ENCODE measurements at regions of chr11 and their contacts with region 1.

Region 1: GRCh38 chr11:59822989-59823566 is 12.5 kb upstream of the MRPL16 start:
- DNase-seq: peak; percentile 53
- ATAC-seq: peak; percentile 91
- H3K4me3 ChIP-seq: no peak overlapping the region
- H3K27ac ChIP-seq: no peak overlapping the region
- H3K4me1 ChIP-seq: no peaks in the 10 kb centered on the region
- H3K27me3 ChIP-seq: peaks cover 6% of the 10 kb centered on the region
- CTCF ChIP-seq: peak; percentile 68
- POLR2A ChIP-seq: no peak
- RAD21 ChIP-seq: peak; percentile 63

Region 2: DNA sequence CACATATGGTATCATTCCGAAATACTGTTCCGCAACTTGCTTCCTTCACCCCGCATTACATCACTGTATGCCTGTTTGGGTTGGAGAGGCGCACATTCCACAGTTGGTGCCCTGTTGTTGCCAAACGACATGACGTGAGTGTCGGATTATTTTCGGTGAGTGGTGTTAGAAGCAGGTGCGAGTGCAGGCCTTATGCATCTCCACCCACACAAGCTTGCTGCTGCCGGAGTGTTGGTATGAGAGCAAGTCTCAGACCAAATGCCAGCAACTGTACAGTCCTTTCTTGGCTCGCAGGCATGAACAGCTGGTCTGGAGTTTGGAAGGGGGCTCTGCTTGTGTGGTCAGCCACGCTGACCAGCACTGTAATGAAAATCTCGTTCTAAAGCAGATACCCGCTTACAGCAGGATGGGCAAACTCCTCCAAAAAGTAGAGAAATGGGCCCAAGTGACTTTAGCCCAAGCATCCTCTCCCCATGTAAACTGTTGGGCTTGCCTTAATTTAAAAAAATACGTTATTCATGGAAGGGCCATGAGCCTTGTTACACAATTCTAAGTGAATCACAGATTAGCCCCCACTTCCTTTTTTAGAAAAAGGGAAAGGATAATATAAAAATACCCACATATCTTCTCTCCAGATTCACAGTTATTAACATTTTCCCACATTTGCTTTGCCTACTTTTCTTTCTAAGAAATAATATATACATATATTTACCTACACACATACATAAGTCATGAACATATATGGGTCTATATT is 1848.1 kb before region 1 on chr11:
- CTCF ChIA-PET with region 1: no interaction called
- POLR2A ChIA-PET with region 1: no interaction called
- dilution Hi-C with region 1: no loop called
- in situ Hi-C with region 1: no loop called
- intact Hi-C with region 1: no loop called
- DNase-seq: no peak
- ATAC-seq: no peak
- H3K4me3 ChIP-seq: no peak overlapping the region
- H3K27ac ChIP-seq: no peak overlapping the region
- H3K4me1 ChIP-seq: peaks cover 2% of the 10 kb centered on the region; the same call in 1 of the 2 replicates
- H3K27me3 ChIP-seq: peaks cover 3% of the 10 kb centered on the region; the same call in 1 of the 2 replicates
- CTCF ChIP-seq: no peak
- POLR2A ChIP-seq: no peak
- RAD21 ChIP-seq: no peak

Region 3: DNA sequence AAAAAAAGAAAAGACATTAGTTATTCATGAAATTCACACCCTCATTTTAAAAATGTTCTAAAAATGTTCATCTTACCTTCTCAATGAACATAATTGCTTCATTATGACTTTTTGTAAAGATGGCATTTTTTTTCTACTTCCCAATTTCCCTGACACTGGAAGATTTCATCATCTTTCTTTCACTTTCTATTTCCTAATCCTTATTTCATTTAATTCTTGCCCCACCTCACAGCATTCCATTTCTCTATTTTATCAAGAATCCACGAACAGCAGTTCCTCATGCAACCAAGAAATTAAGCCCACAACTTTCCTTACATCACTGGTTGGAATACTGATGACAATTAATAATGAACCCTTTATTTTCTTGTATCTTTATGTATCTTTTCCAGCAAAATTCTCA is 156.1 kb before region 1 on chr11:
- CTCF ChIA-PET with region 1: no interaction called
- POLR2A ChIA-PET with region 1: no interaction called
- dilution Hi-C with region 1: no loop called
- in situ Hi-C with region 1: no loop called
- intact Hi-C with region 1: no loop called
- DNase-seq: peak; percentile 15
- ATAC-seq: no peak
- H3K4me3 ChIP-seq: no peak overlapping the region
- H3K27ac ChIP-seq: peak overlapping the region; percentile 16; the same call in 1 of the 2 replicates
- H3K4me1 ChIP-seq: peaks cover 3% of the 10 kb centered on the region; the same call in 1 of the 2 replicates
- H3K27me3 ChIP-seq: no peaks in the 10 kb centered on the region
- CTCF ChIP-seq: no peak
- POLR2A ChIP-seq: no peak
- RAD21 ChIP-seq: no peak

Region 4: DNA sequence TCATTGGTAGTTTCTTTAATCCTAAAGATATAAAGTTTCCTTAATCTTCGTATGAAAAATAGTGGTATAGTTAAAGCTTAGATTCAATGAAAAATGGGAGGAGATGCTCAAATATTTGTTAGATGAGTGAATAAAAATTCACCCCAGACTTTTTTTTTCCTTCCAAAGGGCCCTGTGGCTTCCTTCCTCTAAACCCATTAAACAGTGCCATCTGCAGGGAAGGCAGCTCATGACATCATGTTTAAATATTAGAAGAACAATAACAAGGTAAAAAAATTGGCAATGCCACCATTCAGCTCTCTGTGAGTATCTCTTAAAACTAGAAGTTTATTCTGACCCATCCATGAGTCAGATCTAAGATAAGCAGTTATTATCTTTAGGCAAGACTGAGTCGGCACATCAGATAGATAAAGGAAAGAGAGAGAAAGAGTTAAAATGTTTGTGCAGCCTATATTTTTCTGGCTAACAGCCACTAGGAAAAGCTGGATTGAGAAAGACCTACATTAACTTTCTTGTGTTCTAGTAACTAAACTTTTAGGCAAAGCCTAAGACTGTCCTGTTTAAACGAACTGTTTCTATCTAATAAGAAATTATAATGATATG is 96.0 kb after region 1 on chr11:
- CTCF ChIA-PET with region 1: no interaction called
- POLR2A ChIA-PET with region 1: no interaction called
- dilution Hi-C with region 1: no loop called
- in situ Hi-C with region 1: no loop called
- intact Hi-C with region 1: loop called (anchors 1 kb)
- DNase-seq: peak; percentile 7
- ATAC-seq: no peak
- H3K4me3 ChIP-seq: no peak overlapping the region
- H3K27ac ChIP-seq: no peak overlapping the region
- H3K4me1 ChIP-seq: no peaks in the 10 kb centered on the region
- H3K27me3 ChIP-seq: no peaks in the 10 kb centered on the region
- CTCF ChIP-seq: peak; percentile 52
- POLR2A ChIP-seq: no peak
- RAD21 ChIP-seq: peak; percentile 47

Region 5: DNA sequence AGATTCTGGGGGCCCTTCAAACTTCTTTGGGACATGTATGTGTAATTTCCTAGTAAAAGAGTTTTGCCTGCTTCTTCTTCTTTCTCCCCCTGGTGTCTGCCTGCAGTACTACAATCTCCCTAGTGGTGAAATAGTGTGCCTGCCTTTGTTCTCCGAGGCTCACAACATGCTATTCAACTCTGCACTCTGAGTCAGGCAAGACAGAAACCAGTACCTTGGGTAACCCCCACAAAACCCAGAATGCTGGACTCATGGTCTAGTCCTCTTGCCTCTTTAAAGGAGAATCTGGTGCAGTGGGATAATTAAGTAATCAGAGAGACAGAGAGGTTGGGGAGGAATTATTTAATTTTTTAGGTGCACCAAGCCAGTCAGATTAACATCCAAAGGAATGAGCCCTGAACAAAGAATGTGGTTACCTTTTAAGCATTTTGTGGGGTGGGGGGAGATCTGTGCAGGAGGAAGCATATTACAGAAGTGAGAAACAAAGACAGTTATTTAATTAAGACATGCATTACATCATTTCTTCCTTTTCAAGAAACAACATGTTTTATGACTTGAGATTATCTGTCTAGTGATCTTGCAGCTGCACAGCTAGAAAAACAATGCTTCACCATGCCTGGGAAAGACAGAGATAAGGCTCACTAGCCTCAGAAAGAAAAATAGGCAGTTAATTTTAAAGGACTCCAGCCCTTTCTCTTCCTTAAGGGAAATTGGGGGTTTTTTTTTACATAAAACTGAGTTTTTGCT is 370.8 kb after region 1 on chr11:
- CTCF ChIA-PET with region 1: no interaction called
- POLR2A ChIA-PET with region 1: no interaction called
- dilution Hi-C with region 1: no loop called
- in situ Hi-C with region 1: loop called (anchors 25 kb)
- intact Hi-C with region 1: loop called (anchors 1 kb)
- DNase-seq: peak; percentile 11
- ATAC-seq: peak; percentile 29; the same call in 1 of the 2 replicates
- H3K4me3 ChIP-seq: no peak overlapping the region
- H3K27ac ChIP-seq: no peak overlapping the region
- H3K4me1 ChIP-seq: no peaks in the 10 kb centered on the region
- H3K27me3 ChIP-seq: no peaks in the 10 kb centered on the region
- CTCF ChIP-seq: peak; percentile 89
- POLR2A ChIP-seq: no peak
- RAD21 ChIP-seq: peak; percentile 41

Region 6: DNA sequence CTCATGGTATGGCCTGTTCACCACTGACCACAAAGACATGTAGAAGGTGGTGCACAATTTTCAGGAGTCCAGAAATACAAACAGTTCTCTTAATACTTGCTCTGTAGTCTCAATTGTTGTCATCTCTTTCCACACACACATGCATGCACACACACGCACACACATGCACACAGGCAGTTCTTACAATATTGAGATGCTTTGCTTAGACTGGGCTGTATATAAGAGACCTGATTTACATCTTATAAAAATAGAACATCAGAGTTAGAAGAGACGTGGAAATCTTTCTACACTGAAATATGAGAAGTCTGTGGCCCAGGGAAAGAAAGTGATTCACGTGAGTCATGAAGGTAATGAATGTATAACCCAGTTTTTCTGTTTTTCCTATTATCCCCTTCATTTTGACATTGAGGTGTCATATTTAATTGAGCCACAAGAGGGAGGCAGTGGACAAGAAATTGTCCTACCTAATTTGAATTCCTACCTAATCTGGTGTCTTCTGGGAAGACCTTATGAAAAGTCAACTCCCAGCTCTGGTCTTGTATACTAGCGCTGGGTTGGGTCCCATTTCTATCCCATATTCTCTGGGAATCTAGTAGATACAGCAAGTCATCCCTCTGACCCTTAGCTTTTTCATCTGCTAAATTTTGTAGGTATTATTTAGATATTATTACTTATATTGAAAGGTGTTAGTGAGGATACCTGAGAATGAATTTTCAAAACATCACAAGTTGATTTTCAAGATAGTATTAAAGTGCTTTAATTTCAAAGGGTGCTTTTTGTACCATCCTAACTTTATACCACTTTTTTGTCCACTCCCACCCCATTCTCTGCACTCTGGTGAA is 442.5 kb after region 1 on chr11:
- CTCF ChIA-PET with region 1: no interaction called
- POLR2A ChIA-PET with region 1: no interaction called
- dilution Hi-C with region 1: no loop called
- in situ Hi-C with region 1: no loop called
- intact Hi-C with region 1: loop called (anchors 10 kb)
- DNase-seq: peak; percentile 7
- ATAC-seq: peak; percentile 42; the same call in 1 of the 2 replicates
- H3K4me3 ChIP-seq: no peak overlapping the region
- H3K27ac ChIP-seq: no peak overlapping the region
- H3K4me1 ChIP-seq: no peaks in the 10 kb centered on the region
- H3K27me3 ChIP-seq: no peaks in the 10 kb centered on the region
- CTCF ChIP-seq: peak; percentile 61
- POLR2A ChIP-seq: no peak
- RAD21 ChIP-seq: peak; percentile 44